Posterior cingulate gyrus (tissue), 11 donors: ENCODE measurements at regions of chr12 and their contacts with region 1.

Region 1: GRCh38 chr12:10153271-10154144 is 18.4 kb downstream of the OLR1 start:
- DNase-seq: peak; percentile 55 to 95 (median 73)

Region 2: GRCh38 chr12:10190558-10191388 is 37.3 kb after region 1 on chr12:
- intact Hi-C with region 1: loop called (anchors 1 kb)
- DNase-seq: peak in 8 of 10 donors; percentile 27 to 93 (median 60)

Region 3: DNA sequence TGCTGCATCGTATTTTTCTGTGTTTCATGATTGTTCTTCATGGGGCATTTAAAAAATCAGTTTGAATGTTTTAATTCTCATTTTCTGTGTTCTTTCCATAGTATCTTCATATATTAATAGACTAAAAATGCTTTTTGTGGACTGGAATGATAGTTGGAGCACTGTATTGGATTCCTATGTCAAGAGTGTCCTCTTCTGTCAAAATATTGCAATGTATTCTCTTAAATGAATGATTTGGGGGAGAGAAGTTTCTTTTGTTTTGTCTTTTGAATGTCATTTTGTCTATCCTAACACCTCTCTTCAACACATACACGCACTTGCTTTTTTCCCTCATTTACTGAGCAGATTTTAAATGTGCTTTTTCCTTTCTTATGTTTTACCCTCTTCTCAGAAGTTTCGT is 347.5 kb after region 1 on chr12:
- intact Hi-C with region 1: loop called (anchors 5 kb)
- DNase-seq: no peak